Activated CD4-positive, alpha-beta T cell treated with anti-CD3 and anti-CD28 coated beads for 36 hours (primary cell): ENCODE measurements at regions of chr14 and their contacts with region 1.

Region 1: GRCh38 chr14:88005978-88006851 is 1.3 kb downstream of the GPR65 start:
- DNase-seq: peak; percentile 83
- ATAC-seq: peak; percentile 89
- H3K4me3 Mint-ChIP-seq: peak overlapping the region; percentile 82
- H3K27ac Mint-ChIP-seq: peak overlapping the region; percentile 92
- H3K4me1 Mint-ChIP-seq: peaks cover 63% of the 10 kb centered on the region
- H3K27me3 Mint-ChIP-seq: no peaks in the 10 kb centered on the region

Region 2: DNA sequence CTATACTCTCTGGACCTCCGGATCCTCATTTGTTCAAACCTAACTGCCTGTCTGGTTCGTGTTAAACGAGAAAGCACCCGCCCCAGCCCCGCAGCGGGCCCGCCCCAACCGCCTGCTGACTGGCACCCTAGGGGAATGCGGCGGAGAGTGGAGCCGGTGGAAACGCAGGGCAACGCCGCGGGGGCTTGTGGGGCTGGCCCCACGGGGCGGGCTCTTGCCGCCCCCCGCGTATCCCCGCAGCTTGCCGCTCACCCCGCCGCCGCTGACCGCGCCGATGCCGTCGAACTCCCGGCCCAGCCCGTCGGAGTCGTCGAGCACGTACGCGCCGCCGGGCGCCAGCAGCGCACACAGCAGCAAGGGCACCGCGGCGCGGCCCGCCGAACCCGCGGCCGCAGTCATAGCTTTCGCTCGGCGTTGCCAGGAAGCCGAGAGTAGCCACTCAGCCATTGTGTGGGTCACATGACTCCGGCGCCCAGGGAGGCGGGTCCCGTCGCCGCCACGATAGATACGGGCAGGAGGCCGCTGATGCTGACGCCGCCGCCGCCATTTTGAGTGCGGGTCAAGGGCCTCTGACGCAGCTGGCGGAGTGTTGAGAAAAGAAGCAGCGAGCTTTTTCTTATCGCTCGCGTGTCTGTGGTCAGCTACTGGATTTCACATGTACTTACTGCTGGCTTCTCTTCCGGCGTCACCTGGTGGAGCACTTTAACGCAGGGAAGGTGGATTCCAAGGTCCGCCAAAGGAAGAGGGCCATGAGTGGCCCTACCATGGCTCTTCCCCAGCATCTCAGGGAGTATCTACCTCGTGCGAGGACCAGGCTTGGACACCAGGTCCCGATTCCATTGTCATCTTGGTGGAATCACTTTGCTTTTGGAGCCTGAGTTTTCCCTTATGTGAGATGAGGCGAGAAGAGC is 13.2 kb before region 1 on chr14 and contains the start of gene GALC:
- CTCF ChIA-PET with region 1: interaction called, 9 read pairs
- POLR2A ChIA-PET with region 1: interaction called, 21 read pairs
- intact Hi-C with region 1: loop called (anchors 1 kb)
- DNase-seq: peak; percentile 97
- ATAC-seq: peak; percentile 90
- H3K4me3 Mint-ChIP-seq: peak within 1 kb of the TSS; percentile 81
- H3K27ac Mint-ChIP-seq: peak within 1 kb of the TSS; percentile 95
- H3K4me1 Mint-ChIP-seq: peaks cover 56% of the 10 kb centered on the region
- H3K27me3 Mint-ChIP-seq: no peaks in the 10 kb centered on the region
- total RNA-seq, gene GALC: 10.3 to 10.8 TPM

Region 3: DNA sequence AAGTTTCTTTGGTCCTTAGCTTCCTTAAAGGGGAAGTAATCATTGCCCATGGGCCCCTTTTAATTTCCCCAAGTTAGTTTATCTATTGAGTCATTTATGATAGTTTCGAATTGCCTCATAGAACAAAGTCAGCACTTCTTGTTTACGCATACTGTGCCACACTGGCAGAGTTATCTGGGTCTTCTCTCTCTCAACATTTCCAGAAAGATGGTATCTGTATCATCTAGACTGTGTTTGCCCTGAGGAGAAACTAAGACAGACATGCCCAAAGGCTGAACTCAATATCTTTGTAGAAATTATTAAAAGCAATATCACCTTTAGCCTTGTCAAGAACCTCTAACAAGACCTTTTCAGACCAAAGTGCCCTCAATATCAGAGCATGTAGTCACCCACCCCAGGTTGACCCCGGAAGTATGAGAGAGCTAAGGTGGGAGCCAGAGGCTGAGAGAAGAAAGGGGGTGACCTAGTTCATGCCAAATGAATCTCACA is 38.7 kb after region 1 on chr14:
- CTCF ChIA-PET with region 1: no interaction called
- POLR2A ChIA-PET with region 1: no interaction called
- intact Hi-C with region 1: loop called (anchors 2 to 5 kb)
- DNase-seq: peak; percentile 12
- ATAC-seq: peak; percentile 95
- H3K4me3 Mint-ChIP-seq: no peak overlapping the region
- H3K27ac Mint-ChIP-seq: peak overlapping the region; percentile 3
- H3K4me1 Mint-ChIP-seq: peaks cover 15% of the 10 kb centered on the region
- H3K27me3 Mint-ChIP-seq: peaks cover 3% of the 10 kb centered on the region

Region 4: GRCh38 chr14:88562831-88563686 is 556.8 kb after region 1 on chr14 and contains the start of gene ZC3H14:
- CTCF ChIA-PET with region 1: no interaction called
- POLR2A ChIA-PET with region 1: no interaction called
- intact Hi-C with region 1: loop called (anchors 5 to 10 kb)
- DNase-seq: peak; percentile 91
- ATAC-seq: peak; percentile 94
- H3K4me3 Mint-ChIP-seq: peak within 1 kb of the TSS; percentile 83
- H3K27ac Mint-ChIP-seq: peak within 1 kb of the TSS; percentile 92
- H3K4me1 Mint-ChIP-seq: peaks cover 31% of the 10 kb centered on the region
- H3K27me3 Mint-ChIP-seq: peaks cover 12% of the 10 kb centered on the region
- total RNA-seq, gene ZC3H14: 46.9 to 63.6 TPM